OCI-LY7 (cell line): ENCODE measurements at regions of chr15 and their contacts with region 1.

Region 1: DNA sequence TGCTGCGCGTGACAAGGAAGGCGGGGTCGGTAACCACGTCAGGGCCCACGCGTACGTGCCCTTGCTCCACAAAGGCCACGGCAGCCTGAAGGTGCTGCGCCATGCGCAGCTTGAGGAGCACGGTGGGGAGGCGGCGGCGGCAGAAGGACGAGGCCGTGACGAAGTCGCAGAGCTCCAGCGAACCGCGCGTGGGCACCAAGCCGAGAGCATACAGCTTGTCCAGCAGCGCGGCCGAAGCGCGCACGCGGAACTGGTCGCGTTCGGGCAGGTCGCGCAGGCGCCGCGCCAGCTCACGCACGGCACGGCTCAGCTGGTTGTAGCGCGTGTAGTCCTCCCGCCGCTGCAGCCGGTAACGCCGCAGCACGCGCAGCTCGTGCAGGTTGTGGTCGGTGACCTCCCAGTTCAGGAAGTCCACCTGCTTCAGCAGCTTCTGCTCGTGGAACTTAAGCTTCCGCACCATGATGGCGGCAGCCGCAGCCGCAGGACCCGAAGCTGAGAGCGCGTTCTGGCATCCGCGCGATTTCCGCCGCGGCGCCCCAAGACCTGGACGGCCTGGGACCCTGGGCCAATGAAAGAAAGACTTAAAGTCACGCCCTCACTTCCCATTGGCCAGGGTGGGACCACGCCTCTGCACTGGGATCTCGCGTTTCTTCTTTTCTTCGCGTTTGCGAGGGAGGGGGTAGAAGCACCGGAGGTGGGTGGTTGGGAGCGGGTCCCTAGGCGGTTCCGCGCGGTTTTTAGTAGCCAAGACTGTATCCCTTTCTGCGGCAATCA is at the start of gene IMP3:
- DNase-seq: peak; percentile 98
- H3K4me3 ChIP-seq: peak within 1 kb of the TSS; percentile 89
- H3K27ac ChIP-seq: peak within 1 kb of the TSS; percentile 85
- H3K4me1 ChIP-seq: peaks cover 39% of the 10 kb centered on the region
- CTCF ChIP-seq: no peak
- total RNA-seq, gene IMP3: 135 and 174 TPM in 2 replicates

Region 2: DNA sequence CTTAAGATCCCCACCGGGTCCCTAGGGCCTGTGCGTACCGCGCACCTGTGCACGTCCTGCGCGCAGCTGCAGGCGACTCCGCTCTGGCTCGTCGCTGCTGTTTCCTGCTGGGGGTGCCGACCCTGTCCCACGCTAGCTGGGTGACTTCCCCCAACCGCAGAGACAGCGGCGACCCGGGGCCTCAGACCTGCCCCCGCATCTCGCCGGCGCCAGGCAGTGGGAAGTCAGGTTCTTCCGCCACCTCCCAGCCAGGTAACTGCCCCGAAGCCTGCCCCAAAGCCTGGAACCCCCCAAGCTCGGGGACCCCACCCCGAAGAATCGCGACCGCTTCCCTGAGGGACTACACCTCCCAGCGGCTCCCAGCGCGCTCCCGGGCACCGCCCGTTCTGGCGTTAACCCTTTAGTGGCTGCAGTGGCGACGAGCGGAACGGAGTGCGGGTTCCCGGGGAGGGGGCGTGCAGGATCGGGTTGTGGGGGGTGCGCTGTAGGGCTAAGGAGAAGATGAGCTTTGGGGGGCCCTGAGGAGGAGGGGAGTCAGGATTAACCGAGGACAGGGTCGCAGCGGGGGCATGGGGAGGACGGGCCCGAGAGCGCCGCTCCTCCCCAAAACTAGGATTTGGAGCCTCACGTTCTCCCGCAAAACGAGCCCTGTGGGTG is 292.5 kb before region 1 on chr15:
- CTCF ChIA-PET with region 1: no interaction called
- POLR2A ChIA-PET with region 1: no interaction called
- intact Hi-C with region 1: loop called (anchors 5 kb)
- DNase-seq: peak; percentile 96
- H3K4me3 ChIP-seq: peak overlapping the region; percentile 88
- H3K27ac ChIP-seq: peak overlapping the region; percentile 89
- H3K4me1 ChIP-seq: peaks cover 50% of the 10 kb centered on the region
- CTCF ChIP-seq: no peak

Region 3: DNA sequence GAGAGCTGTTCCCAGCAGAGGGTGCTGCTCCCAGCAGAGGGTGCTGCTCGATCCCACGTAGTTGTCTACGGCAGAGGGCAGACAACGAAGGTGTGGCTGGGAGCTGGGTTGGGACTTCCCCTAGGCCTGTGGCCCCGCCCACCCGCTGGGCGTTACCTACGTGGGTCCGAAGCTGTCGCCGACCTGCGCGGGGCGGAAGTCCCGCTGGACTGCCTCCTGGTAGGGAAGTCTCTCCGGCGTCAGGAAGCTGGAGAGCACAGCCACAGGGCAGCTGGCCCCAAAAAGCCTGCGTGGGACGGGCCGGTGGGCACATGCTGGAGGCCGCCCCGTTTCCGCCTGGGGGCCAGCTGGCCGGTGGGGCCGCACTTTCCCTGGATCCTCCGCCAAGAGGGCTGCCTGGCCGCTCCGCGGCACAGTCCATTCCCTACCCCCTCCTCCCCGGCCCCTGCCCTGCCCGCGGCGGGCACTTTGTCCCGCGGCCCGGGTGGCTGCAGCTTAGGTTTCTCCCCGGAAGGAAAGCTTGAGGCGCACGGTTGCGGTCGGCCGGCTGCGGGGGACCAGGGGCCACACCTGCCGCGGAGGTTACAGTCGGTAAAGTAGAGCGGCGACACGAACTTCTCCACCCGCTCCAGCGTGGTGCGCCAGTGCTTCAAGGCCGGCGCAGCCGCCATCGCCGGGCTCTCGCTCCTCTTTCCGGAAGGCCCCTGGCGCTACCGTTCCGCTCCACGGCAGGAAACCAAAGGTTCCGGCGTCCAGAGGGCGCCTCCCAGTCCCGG is 271.8 kb before region 1 on chr15 and contains the start of gene MAN2C1:
- CTCF ChIA-PET with region 1: interaction called, 6 read pairs
- POLR2A ChIA-PET with region 1: interaction called, 23 read pairs
- intact Hi-C with region 1: loop called (anchors 1 kb)
- DNase-seq: peak; percentile 99
- H3K4me3 ChIP-seq: peak within 1 kb of the TSS; percentile 77
- H3K27ac ChIP-seq: peak within 1 kb of the TSS; percentile 88
- H3K4me1 ChIP-seq: peaks cover 23% of the 10 kb centered on the region
- CTCF ChIP-seq: peak; percentile 89
- total RNA-seq, gene MAN2C1: 98.8 and 113 TPM in 2 replicates

Region 4: DNA sequence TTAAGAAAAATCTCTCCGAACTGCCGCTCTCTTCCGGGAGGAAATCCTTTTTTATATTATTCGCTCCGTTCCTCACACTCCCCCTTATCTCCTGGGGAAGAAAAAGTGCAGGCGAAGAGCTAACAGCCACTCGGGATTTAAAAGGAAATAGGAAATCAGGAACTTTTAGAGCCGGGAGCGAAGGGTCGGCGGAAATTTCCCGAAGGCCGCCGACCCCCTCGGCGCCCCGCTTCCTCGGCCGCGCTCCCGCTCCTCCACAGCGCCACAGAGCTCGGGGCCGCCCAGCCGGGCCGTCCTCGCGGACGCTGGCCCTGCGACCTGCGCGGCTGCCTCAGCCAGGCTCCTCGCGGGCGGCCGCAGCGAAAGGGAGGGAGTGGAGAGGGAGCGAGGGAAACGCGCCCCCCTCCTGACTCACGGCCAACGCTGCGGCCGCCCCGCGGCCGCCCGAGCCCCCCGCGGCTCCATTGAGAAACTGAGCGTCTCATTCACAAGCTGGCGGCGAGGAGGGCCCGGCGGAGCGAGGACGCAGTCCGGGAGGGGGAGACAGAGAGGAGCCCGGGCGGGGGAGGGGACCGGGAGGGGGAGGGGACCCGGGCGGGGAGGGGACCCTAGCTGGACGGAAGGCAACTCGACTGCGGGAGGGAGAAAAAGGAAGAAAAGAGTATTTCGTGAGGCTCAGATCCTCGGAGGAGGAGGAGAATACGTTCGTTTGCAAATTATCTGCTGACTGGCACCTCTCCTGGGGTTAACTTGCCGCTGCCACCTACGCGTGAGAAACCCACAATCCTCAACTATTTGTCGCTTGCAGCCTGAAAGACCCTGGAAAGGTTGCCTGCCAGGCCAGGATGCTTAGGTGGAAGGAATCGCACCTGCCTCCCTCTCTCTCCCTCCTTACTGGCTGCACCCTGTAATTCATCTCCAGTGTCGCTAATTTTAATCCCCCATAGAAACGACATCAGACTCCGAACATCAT is 60.7 kb before region 1 on chr15 and contains the start of gene PTPN9:
- CTCF ChIA-PET with region 1: interaction called, 3 read pairs
- POLR2A ChIA-PET with region 1: interaction called, 6 read pairs
- intact Hi-C with region 1: loop called (anchors 2 kb)
- DNase-seq: peak; percentile 87
- H3K4me3 ChIP-seq: peak within 1 kb of the TSS; percentile 88
- H3K27ac ChIP-seq: peak within 1 kb of the TSS; percentile 71
- H3K4me1 ChIP-seq: peaks cover 14% of the 10 kb centered on the region
- CTCF ChIP-seq: peak; percentile 66
- total RNA-seq, gene PTPN9: 12.5 and 16.5 TPM in 2 replicates

Region 5: GRCh38 chr15:75625542-75626347 is 14.2 kb before region 1 on chr15 and contains the start of gene SNUPN:
- CTCF ChIA-PET with region 1: no interaction called
- POLR2A ChIA-PET with region 1: interaction called, 15 read pairs
- intact Hi-C with region 1: loop called (anchors 1 kb)
- DNase-seq: peak; percentile 98
- H3K4me3 ChIP-seq: peak within 1 kb of the TSS; percentile 99
- H3K27ac ChIP-seq: peak within 1 kb of the TSS; percentile 93
- H3K4me1 ChIP-seq: peaks cover 21% of the 10 kb centered on the region
- CTCF ChIP-seq: no peak
- total RNA-seq, gene SNUPN: 32.4 and 44.4 TPM in 2 replicates

Region 6: GRCh38 chr15:75684642-75685041 is 44.7 kb after region 1 on chr15:
- CTCF ChIA-PET with region 1: no interaction called
- POLR2A ChIA-PET with region 1: no interaction called
- intact Hi-C with region 1: loop called (anchors 5 kb)
- DNase-seq: no peak
- H3K4me3 ChIP-seq: no peak overlapping the region
- H3K27ac ChIP-seq: no peak overlapping the region
- H3K4me1 ChIP-seq: no peaks in the 10 kb centered on the region
- CTCF ChIP-seq: no peak